ENCODE measurements at regions of chr12 and their contacts with region 1.

Region 1: GRCh38 chr12:16939871-16940306 is 333.9 kb upstream of the LMO3 start:
- DNase-seq: peak; percentile 78
- H3K4me3 Mint-ChIP-seq: no peak overlapping the region
- H3K27ac Mint-ChIP-seq: no peak overlapping the region
- H3K4me1 Mint-ChIP-seq: peaks cover 5% of the 10 kb centered on the region
- H3K27me3 Mint-ChIP-seq: peaks cover 28% of the 10 kb centered on the region
- CTCF ChIP-seq: peak; percentile 93

Region 2: GRCh38 chr12:16165506-16165905 is 774.4 kb before region 1 on chr12:
- CTCF ChIA-PET with region 1: interaction called, 6 read pairs
- POLR2A ChIA-PET with region 1: no interaction called
- intact Hi-C with region 1: loop called (anchors 5 kb)
- DNase-seq: peak; percentile 70
- H3K4me3 Mint-ChIP-seq: no peak overlapping the region
- H3K27ac Mint-ChIP-seq: no peak overlapping the region
- H3K4me1 Mint-ChIP-seq: peaks cover 6% of the 10 kb centered on the region
- H3K27me3 Mint-ChIP-seq: no peaks in the 10 kb centered on the region
- CTCF ChIP-seq: peak; percentile 58

Region 3: GRCh38 chr12:16949871-16950667 is 10.2 kb after region 1 on chr12:
- CTCF ChIA-PET with region 1: interaction called, 19 read pairs
- POLR2A ChIA-PET with region 1: no interaction called
- intact Hi-C with region 1: no loop called
- DNase-seq: no peak
- H3K4me3 Mint-ChIP-seq: no peak overlapping the region
- H3K27ac Mint-ChIP-seq: no peak overlapping the region
- H3K4me1 Mint-ChIP-seq: peaks cover 9% of the 10 kb centered on the region
- H3K27me3 Mint-ChIP-seq: peaks cover 12% of the 10 kb centered on the region
- CTCF ChIP-seq: no peak

Region 4: GRCh38 chr12:17159506-17160300 is 219.8 kb after region 1 on chr12:
- CTCF ChIA-PET with region 1: no interaction called
- POLR2A ChIA-PET with region 1: no interaction called
- intact Hi-C with region 1: loop called (anchors 10 kb)
- DNase-seq: no peak
- H3K4me3 Mint-ChIP-seq: no peak overlapping the region
- H3K27ac Mint-ChIP-seq: no peak overlapping the region
- H3K4me1 Mint-ChIP-seq: no peaks in the 10 kb centered on the region
- H3K27me3 Mint-ChIP-seq: no peaks in the 10 kb centered on the region
- CTCF ChIP-seq: no peak

Region 5: GRCh38 chr12:17588968-17589367 is 649.1 kb after region 1 on chr12:
- CTCF ChIA-PET with region 1: interaction called, 17 read pairs
- POLR2A ChIA-PET with region 1: no interaction called
- intact Hi-C with region 1: loop called (anchors 1 kb)
- DNase-seq: peak; percentile 47
- H3K4me3 Mint-ChIP-seq: no peak overlapping the region
- H3K27ac Mint-ChIP-seq: no peak overlapping the region
- H3K4me1 Mint-ChIP-seq: no peaks in the 10 kb centered on the region
- H3K27me3 Mint-ChIP-seq: peaks cover 24% of the 10 kb centered on the region
- CTCF ChIP-seq: peak; percentile 62

Region 6: DNA sequence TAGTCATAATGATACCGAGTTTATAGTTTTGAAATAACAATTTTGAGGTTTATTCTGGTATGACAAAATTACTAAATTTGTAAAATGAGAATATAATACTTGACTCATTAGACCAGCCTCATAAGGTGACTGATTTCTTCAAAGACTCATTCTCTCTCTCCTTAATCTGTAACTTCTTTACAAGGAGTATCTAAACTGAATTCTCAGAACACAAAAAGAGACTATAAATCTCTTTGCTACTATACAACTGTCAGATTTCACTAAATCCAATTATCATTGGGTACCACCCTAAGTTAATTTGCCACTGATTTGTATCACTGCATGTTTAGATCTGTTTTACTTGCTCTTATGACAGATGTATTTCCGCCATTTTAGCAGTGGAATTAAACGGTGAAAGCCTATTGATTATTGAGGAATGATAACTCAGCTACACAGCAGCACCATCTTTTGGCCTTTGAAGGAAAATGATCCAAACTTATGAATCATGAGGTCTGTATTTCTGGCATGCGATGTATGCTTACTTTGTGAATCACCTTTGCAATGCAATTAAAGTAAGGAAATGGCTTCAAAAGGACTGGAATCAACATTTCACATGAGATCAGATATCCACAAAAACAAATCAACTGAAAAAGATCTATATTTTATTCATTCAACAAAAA is 988.9 kb after region 1 on chr12:
- CTCF ChIA-PET with region 1: no interaction called
- POLR2A ChIA-PET with region 1: no interaction called
- intact Hi-C with region 1: loop called (anchors 1 kb)
- DNase-seq: peak; percentile 60
- H3K4me3 Mint-ChIP-seq: no peak overlapping the region
- H3K27ac Mint-ChIP-seq: no peak overlapping the region
- H3K4me1 Mint-ChIP-seq: peaks cover 7% of the 10 kb centered on the region
- H3K27me3 Mint-ChIP-seq: peaks cover 15% of the 10 kb centered on the region
- CTCF ChIP-seq: peak; percentile 55

Region 7: GRCh38 chr12:18224745-18225144 is 1284.9 kb after region 1 on chr12:
- CTCF ChIA-PET with region 1: interaction called, 3 read pairs
- POLR2A ChIA-PET with region 1: no interaction called
- intact Hi-C with region 1: loop called (anchors 2 kb)
- DNase-seq: peak; percentile 65
- H3K4me3 Mint-ChIP-seq: no peak overlapping the region
- H3K27ac Mint-ChIP-seq: no peak overlapping the region
- H3K4me1 Mint-ChIP-seq: no peaks in the 10 kb centered on the region
- H3K27me3 Mint-ChIP-seq: no peaks in the 10 kb centered on the region
- CTCF ChIP-seq: peak; percentile 50